ENCODE measurements at regions of chr1 and their contacts with region 1.

Region 1: GRCh38 chr1:210584439-210585113 is 255.9 kb downstream of the HHAT start:
- DNase-seq: peak; percentile 83

Region 2: DNA sequence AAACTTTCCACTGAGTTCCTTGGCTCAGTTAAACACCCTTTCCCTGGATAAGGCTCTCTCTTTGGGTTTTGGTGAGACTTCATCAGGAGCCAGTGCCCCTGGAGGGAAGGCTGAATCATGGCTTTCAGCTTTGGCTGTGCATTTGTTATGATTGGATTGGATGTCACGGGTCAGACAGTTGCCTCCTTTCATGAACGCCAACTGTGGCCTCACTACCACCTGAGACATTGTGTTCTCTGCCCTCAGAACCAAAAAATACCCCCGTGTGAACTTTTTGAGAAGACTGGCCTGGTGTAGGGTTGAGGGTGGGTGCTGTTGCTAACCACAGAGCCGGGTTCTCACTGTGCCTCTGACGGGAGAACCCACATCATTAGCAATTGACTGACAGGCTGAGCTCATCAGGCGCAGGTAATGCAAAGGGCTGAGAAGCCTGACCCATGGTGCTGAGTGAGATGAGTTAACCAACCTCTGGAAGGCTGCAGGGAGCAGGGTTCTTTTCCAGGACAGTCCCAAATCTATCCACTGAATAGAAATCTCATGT is 190.2 kb before region 1 on chr1:
- intact Hi-C with region 1: no loop called
- DNase-seq: no peak

Region 3: DNA sequence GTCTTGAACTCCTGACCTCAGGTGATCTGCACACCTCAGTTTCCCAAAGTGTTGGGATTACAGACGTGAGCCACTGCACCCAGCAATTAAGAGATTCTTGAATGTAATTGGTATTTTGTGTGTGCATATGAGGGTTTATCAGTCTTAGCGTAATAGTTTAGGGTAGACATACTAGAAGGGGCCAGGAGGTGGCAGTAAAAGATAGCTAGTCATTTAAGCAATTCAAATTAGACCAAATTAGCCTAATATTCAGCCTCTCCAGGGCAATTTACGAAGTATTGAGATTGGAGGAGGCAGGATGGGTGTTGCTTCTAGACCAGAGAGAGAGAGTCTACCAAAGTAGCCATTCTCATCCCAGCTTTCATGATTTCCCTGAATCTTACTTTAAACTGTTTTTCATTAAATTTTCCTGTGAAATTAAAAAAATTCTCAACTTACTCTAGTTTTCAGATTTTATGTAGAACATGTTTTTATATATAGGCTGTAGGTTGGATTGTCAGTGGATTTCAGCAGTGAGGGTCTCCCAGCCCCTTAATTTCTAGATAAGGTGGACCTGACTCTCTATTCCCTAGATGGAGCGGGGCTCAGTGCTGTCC is 136.2 kb before region 1 on chr1:
- intact Hi-C with region 1: loop called (anchors 5 kb)
- DNase-seq: no peak

Region 4: DNA sequence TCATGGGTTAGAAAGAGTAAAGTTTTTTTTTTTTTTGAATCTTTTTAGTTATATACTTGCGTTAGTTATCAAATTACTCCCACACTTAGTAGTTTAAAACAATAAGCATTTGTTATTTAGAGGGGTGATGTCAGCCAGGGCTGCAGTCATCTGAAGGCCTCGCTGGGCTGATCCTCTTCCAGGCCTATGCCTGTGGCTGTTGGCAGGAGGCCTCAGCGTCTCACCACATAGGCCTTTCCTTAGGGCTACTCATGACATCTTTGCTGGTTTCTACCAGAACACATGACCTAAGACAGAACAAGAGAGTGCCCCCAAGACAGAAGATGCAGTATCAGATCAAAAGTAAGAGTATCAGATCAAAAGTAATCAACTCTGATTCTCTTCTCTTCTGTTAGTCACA is 88.5 kb before region 1 on chr1:
- intact Hi-C with region 1: no loop called
- DNase-seq: no peak

Region 5: GRCh38 chr1:210951279-210951678 is 366.7 kb after region 1 on chr1:
- intact Hi-C with region 1: loop called (anchors 5 kb)
- DNase-seq: no peak

Region 6: DNA sequence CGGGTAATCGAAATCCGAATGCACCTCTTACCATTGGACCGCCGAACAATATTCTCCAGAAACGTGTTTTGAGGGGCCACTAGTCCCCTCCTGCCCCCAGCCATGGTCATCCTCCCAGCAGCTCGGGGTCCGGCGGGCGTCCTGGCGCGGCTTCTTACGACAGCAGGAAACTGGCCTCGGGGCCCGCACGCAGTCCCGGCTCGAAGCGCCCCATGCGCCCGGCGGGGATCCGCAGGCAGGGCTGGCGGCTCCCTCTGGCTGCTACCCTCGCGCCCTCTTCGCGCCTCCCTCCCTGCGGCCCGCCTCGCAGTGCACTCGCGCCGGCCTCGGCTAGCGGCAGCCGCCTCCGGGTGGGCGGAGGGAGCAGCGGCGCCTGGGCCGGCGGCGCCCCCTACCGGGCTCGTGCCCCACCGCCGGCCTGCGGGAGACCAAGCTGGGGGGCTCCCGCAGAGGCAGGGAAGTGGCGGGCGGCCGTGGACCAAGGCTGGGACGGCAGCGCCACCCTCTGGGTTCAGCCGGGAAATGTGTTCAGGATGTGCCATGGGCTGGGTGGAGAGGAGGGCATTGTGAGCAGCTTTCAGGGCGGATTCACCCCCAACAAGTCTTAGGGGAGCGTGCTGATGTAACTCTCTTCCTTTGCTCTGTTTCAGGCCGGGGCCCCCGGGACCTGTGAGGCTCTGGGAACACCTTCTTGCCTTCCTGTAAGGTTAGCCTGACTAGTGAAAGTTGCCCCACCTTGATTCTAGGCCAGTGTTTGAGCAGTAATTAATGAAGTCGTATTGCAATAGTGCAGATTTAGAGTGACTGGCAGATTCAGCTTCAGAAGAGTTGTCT is 549.5 kb after region 1 on chr1 and contains the start of gene KCNH1:
- intact Hi-C with region 1: loop called (anchors 1 kb)
- DNase-seq: no peak
- total RNA-seq, gene KCNH1: not detected